CD8-positive, alpha-beta memory T cell (primary cell): ENCODE measurements at regions of chr11 and their contacts with region 1.

Region 1: GRCh38 chr11:61083601-61084147 is 18.6 kb upstream of the CD5 start:
- DNase-seq: peak; percentile 51 to 87 (median 67)
- H3K4me3 ChIP-seq: peak overlapping the region; percentile 57
- H3K4me3 Mint-ChIP-seq: peak overlapping the region; percentile 26 to 87 (median 75)
- H3K27ac ChIP-seq: peak overlapping the region; percentile 66
- H3K27ac Mint-ChIP-seq: peak overlapping the region; percentile 94 to 99 (median 96)
- H3K4me1 ChIP-seq: peaks cover 50% of the 10 kb centered on the region
- H3K4me1 Mint-ChIP-seq: peaks cover 38 to 58% (median 52%) of the 10 kb centered on the region in 3 donors
- H3K27me3 ChIP-seq: no peaks in the 10 kb centered on the region
- H3K27me3 Mint-ChIP-seq: peaks cover 0 to 1% of the 10 kb centered on the region in 2 donors

Region 2: DNA sequence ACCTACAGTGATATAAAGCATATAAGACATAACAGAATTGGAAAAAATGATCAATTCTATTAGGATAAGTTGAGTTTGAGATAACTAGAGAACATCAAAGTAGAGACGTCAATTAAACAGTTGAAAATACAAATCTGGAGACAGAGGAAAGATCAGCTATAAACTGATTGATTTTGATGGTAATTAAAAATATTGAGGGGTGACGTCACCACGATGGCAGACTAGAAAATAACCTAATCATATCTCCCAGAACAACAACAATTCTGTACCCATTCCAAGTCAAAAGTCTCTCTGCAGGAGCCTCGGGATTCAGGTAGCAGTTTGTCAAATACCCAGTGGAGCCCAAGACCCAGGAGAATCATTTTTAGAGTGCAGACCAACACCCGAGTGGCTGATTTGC is 539.6 kb before region 1 on chr11:
- CTCF ChIA-PET with region 1: no interaction called
- POLR2A ChIA-PET with region 1: no interaction called
- DNase-seq: no peak
- H3K4me3 ChIP-seq: no peak overlapping the region
- H3K4me3 Mint-ChIP-seq: no peak overlapping the region
- H3K27ac ChIP-seq: no peak overlapping the region
- H3K27ac Mint-ChIP-seq: no peak overlapping the region
- H3K4me1 ChIP-seq: no peaks in the 10 kb centered on the region
- H3K4me1 Mint-ChIP-seq: no peaks in the 10 kb centered on the region
- H3K27me3 ChIP-seq: no peaks in the 10 kb centered on the region
- H3K27me3 Mint-ChIP-seq: peaks cover 8 to 34% of the 10 kb centered on the region in 2 donors

Region 3: DNA sequence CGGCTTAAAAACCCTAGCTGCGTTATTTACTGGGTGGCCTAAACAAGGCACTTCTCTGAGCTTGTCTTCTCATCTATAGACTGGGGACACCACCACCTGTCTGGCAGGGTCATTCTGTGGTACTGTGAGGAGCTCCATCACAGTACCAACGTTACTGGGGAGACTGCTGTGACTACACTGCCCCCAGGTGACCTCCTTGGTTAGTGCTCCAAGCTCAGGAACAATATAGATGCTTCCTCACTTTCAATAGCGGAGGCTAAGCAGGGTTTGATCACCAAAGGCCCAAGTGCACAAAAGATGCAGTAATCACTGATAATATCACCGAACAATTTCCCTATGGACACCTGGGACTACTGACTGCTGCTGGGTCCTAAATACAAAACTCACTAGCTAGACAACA is 196.1 kb before region 1 on chr11:
- CTCF ChIA-PET with region 1: no interaction called
- POLR2A ChIA-PET with region 1: no interaction called
- DNase-seq: peak in 1 of 5 donors; percentile 38
- H3K4me3 ChIP-seq: no peak overlapping the region
- H3K4me3 Mint-ChIP-seq: no peak overlapping the region
- H3K27ac ChIP-seq: no peak overlapping the region
- H3K27ac Mint-ChIP-seq: peak overlapping the region in 5 of 8 donors; percentile 7 to 74 (median 48)
- H3K4me1 ChIP-seq: no peaks in the 10 kb centered on the region
- H3K4me1 Mint-ChIP-seq: peaks cover 6 to 8% (median 8%) of the 10 kb centered on the region in 3 donors
- H3K27me3 ChIP-seq: no peaks in the 10 kb centered on the region
- H3K27me3 Mint-ChIP-seq: no peaks in the 10 kb centered on the region

Region 4: GRCh38 chr11:61021661-61022212 is 61.9 kb before region 1 on chr11:
- CTCF ChIA-PET with region 1: interaction called, 10 read pairs
- POLR2A ChIA-PET with region 1: interaction called, 10 read pairs
- DNase-seq: peak; percentile 82 to 94 (median 89)
- H3K4me3 ChIP-seq: peak overlapping the region; percentile 60
- H3K4me3 Mint-ChIP-seq: peak overlapping the region; percentile 9 to 83 (median 77)
- H3K27ac ChIP-seq: peak overlapping the region; percentile 40
- H3K27ac Mint-ChIP-seq: peak overlapping the region; percentile 94 to 99 (median 98)
- H3K4me1 ChIP-seq: peaks cover 64% of the 10 kb centered on the region
- H3K4me1 Mint-ChIP-seq: peaks cover 61 to 87% (median 67%) of the 10 kb centered on the region in 3 donors
- H3K27me3 ChIP-seq: no peaks in the 10 kb centered on the region
- H3K27me3 Mint-ChIP-seq: peaks cover 0 to 1% of the 10 kb centered on the region in 2 donors

Region 5: GRCh38 chr11:61071208-61071681 is 12.4 kb before region 1 on chr11:
- CTCF ChIA-PET with region 1: interaction called, 17 read pairs
- POLR2A ChIA-PET with region 1: interaction called, 16 read pairs
- DNase-seq: peak; percentile 39 to 83 (median 70)
- H3K4me3 ChIP-seq: peak overlapping the region; percentile 36
- H3K4me3 Mint-ChIP-seq: peak overlapping the region; percentile 12 to 89 (median 77)
- H3K27ac ChIP-seq: peak overlapping the region; percentile 58
- H3K27ac Mint-ChIP-seq: peak overlapping the region; percentile 91 to 100 (median 95)
- H3K4me1 ChIP-seq: peaks cover 73% of the 10 kb centered on the region
- H3K4me1 Mint-ChIP-seq: peaks cover 44 to 85% (median 72%) of the 10 kb centered on the region in 3 donors
- H3K27me3 ChIP-seq: no peaks in the 10 kb centered on the region
- H3K27me3 Mint-ChIP-seq: no peaks in the 10 kb centered on the region